ENCODE measurements at regions of chr19 and their contacts with region 1.

Region 1: DNA sequence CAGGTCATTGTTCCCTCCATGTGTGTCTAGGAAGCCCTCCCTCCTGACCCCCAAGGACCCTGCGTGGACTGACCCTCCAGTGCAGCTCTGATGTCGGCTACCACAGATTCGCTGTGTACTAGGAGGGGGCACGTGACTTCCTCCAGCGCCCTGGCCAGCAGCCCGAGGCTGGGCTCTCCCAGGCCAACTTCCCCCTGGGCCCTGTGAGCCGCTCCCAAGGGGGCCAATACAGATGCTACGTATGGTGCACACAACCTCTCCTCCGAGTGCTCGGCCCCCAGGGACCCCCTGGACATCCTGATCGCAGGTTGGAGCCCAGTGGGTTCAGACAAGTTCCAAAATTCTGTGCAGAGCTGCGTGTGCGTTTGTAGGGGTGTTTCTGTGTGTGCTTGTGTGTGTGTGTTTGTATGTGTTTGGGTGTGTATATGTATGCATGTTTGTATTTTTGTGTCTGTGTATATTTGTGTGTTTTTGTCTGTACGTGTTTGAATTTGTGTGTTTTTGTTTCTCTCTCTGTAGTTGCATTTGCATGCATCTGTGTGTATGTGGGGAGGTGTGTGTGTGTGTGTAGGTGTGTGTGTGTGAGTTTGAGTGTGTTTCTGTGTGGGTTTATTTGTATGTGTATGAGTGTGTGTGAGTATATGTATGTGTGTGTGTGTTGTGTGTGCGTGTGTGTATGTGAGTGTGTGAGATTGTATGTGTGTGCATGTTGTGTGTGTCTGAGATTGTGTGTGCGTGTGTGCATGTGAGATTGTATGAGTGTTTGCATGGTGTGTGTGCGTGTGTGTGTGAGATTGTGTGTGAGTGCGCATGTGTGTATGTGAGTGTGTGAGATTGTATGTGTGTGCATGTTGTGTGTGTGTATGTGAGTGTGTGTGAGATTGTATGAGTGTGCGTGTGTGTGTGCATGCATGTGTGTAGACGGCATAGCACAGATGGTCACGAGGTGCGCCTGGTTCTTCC is 21.4 kb upstream of the LILRA2 start:
- DNase-seq: peak in 1 of 2 donors; percentile 21
- ATAC-seq: peak; percentile 2 to 19 (median 7)
- H3K4me3 ChIP-seq: no peak overlapping the region
- H3K4me3 Mint-ChIP-seq: no peak overlapping the region
- H3K27ac ChIP-seq: no peak overlapping the region
- H3K27ac Mint-ChIP-seq: peak overlapping the region in 1 of 2 donors; percentile 78
- H3K4me1 ChIP-seq: peaks cover 24% of the 10 kb centered on the region
- H3K4me1 Mint-ChIP-seq: peaks cover 18 to 22% of the 10 kb centered on the region in 2 donors
- H3K27me3 ChIP-seq: peaks cover 15% of the 10 kb centered on the region
- H3K27me3 Mint-ChIP-seq: peaks cover 24 to 28% of the 10 kb centered on the region in 2 donors
- CTCF ChIP-seq: no peak

Region 2: GRCh38 chr19:54481322-54481930 is 70.8 kb before region 1 on chr19:
- intact Hi-C with region 1: loop called (anchors 5 kb)
- DNase-seq: peak in 1 of 2 donors; percentile 81
- ATAC-seq: peak; percentile 54 to 75 (median 68)
- H3K4me3 ChIP-seq: no peak overlapping the region
- H3K4me3 Mint-ChIP-seq: peak overlapping the region; percentile 78
- H3K27ac ChIP-seq: no peak overlapping the region
- H3K27ac Mint-ChIP-seq: peak overlapping the region in 1 of 2 donors; percentile 62
- H3K4me1 ChIP-seq: peaks cover 41% of the 10 kb centered on the region
- H3K4me1 Mint-ChIP-seq: peaks cover 42 to 60% of the 10 kb centered on the region in 2 donors
- H3K27me3 ChIP-seq: peaks cover 8% of the 10 kb centered on the region
- H3K27me3 Mint-ChIP-seq: peaks cover 39 to 44% of the 10 kb centered on the region in 2 donors
- CTCF ChIP-seq: peak; percentile 85

Region 3: DNA sequence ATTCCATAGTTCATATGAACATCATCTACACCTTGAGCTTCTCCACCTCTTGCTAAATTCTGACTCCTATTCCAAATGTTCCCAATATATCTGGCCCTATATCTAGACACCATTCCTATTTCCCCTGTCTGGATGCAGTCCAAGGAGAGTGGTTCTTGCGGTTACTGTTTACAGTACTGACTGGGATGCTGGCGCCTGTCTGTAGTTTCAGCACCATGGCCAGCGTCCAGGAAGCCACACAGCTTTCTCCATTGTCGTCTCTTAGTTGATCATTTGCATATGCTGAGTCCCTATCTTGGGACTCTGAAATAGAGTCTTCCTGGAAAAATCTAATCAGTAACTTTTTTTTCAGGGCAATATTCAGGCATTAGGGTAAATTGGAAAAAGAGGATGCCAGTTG is 34.7 kb before region 1 on chr19:
- intact Hi-C with region 1: loop called (anchors 5 kb)
- DNase-seq: peak; percentile 68 to 79
- ATAC-seq: peak; percentile 63 to 88 (median 83)
- H3K4me3 ChIP-seq: no peak overlapping the region
- H3K4me3 Mint-ChIP-seq: no peak overlapping the region
- H3K27ac ChIP-seq: no peak overlapping the region
- H3K27ac Mint-ChIP-seq: no peak overlapping the region
- H3K4me1 ChIP-seq: peaks cover 19% of the 10 kb centered on the region
- H3K4me1 Mint-ChIP-seq: peaks cover 31 to 33% of the 10 kb centered on the region in 2 donors
- H3K27me3 ChIP-seq: peaks cover 12% of the 10 kb centered on the region
- H3K27me3 Mint-ChIP-seq: peaks cover 48 to 69% of the 10 kb centered on the region in 2 donors
- CTCF ChIP-seq: no peak

Region 4: DNA sequence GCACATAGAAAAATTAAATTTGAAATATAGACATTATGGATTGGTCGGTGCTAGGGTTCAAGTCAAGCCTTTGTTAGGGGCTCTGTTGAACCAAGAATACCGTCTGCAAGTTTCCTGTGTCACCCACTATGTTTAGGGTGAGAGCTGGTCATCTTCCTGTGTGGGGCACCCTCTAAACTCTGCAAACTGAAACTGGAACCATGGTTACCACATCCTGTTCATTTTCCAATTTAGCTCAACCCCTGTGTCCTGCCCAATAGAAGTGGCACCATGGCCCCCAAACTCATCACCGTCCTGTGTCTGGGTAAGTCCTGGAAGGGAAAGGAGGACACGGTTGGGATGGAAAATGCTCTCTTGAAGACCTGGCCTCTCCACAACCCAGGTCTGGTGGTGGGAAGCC is 19.7 kb before region 1 on chr19:
- intact Hi-C with region 1: loop called (anchors 1 kb)
- DNase-seq: peak; percentile 54 to 62
- ATAC-seq: peak; percentile 84 to 92 (median 91)
- H3K4me3 ChIP-seq: peak overlapping the region; percentile 51
- H3K4me3 Mint-ChIP-seq: peak overlapping the region; percentile 90
- H3K27ac ChIP-seq: peak overlapping the region; percentile 88
- H3K27ac Mint-ChIP-seq: peak overlapping the region; percentile 88 to 90
- H3K4me1 ChIP-seq: peaks cover 47% of the 10 kb centered on the region
- H3K4me1 Mint-ChIP-seq: peaks cover 78 to 92% of the 10 kb centered on the region in 2 donors
- H3K27me3 ChIP-seq: peaks cover 6% of the 10 kb centered on the region
- H3K27me3 Mint-ChIP-seq: peaks cover 5 to 12% of the 10 kb centered on the region in 2 donors
- CTCF ChIP-seq: no peak

Region 5: GRCh38 chr19:54541712-54542111 is 10.5 kb before region 1 on chr19:
- intact Hi-C with region 1: loop called (anchors 1 kb)
- DNase-seq: no peak
- ATAC-seq: no peak
- H3K4me3 ChIP-seq: no peak overlapping the region
- H3K4me3 Mint-ChIP-seq: no peak overlapping the region
- H3K27ac ChIP-seq: no peak overlapping the region
- H3K27ac Mint-ChIP-seq: peak overlapping the region; percentile 78 to 82
- H3K4me1 ChIP-seq: peaks cover 23% of the 10 kb centered on the region
- H3K4me1 Mint-ChIP-seq: peaks cover 42 to 50% of the 10 kb centered on the region in 2 donors
- H3K27me3 ChIP-seq: no peaks in the 10 kb centered on the region
- H3K27me3 Mint-ChIP-seq: peaks cover 17 to 25% of the 10 kb centered on the region in 2 donors
- CTCF ChIP-seq: no peak

Measured in natural killer cell (primary cell).